Activated naive CD4-positive, alpha-beta T cell treated with anti-CD3 and anti-CD28 coated beads for 36 hours (primary cell): ENCODE measurements at regions of chr4 and their contacts with region 1.

Region 1: GRCh38 chr4:98143001-98143899 is at the start of gene STPG2:
- DNase-seq: peak; percentile 95
- H3K4me3 Mint-ChIP-seq: peak within 1 kb of the TSS; percentile 96
- H3K27ac Mint-ChIP-seq: peak within 1 kb of the TSS; percentile 99
- H3K4me1 Mint-ChIP-seq: peaks cover 19% of the 10 kb centered on the region
- H3K27me3 Mint-ChIP-seq: no peaks in the 10 kb centered on the region
- total RNA-seq, gene STPG2: not detected

Region 2: GRCh38 chr4:97892592-97893266 is 250.5 kb before region 1 on chr4:
- CTCF ChIA-PET with region 1: no interaction called
- intact Hi-C with region 1: no loop called
- DNase-seq: no peak
- H3K4me3 Mint-ChIP-seq: no peak overlapping the region
- H3K27ac Mint-ChIP-seq: no peak overlapping the region
- H3K4me1 Mint-ChIP-seq: no peaks in the 10 kb centered on the region
- H3K27me3 Mint-ChIP-seq: no peaks in the 10 kb centered on the region

Region 3: GRCh38 chr4:98260579-98261290 is 117.5 kb after region 1 on chr4:
- CTCF ChIA-PET with region 1: interaction called, 3 read pairs
- intact Hi-C with region 1: loop called (anchors 1 kb)
- DNase-seq: peak; percentile 95
- H3K4me3 Mint-ChIP-seq: peak overlapping the region; percentile 93
- H3K27ac Mint-ChIP-seq: peak overlapping the region; percentile 94
- H3K4me1 Mint-ChIP-seq: peaks cover 43% of the 10 kb centered on the region
- H3K27me3 Mint-ChIP-seq: no peaks in the 10 kb centered on the region

Region 4: GRCh38 chr4:98467627-98468072 is 324.4 kb after region 1 on chr4:
- CTCF ChIA-PET with region 1: interaction called, 5 read pairs
- intact Hi-C with region 1: loop called (anchors 5 kb)
- DNase-seq: peak; percentile 85
- H3K4me3 Mint-ChIP-seq: peak overlapping the region; percentile 65
- H3K27ac Mint-ChIP-seq: no peak overlapping the region
- H3K4me1 Mint-ChIP-seq: peaks cover 16% of the 10 kb centered on the region
- H3K27me3 Mint-ChIP-seq: no peaks in the 10 kb centered on the region

Region 5: GRCh38 chr4:98851806-98852205 is 708.6 kb after region 1 on chr4:
- CTCF ChIA-PET with region 1: no interaction called
- intact Hi-C with region 1: loop called (anchors 10 kb)
- DNase-seq: no peak
- H3K4me3 Mint-ChIP-seq: no peak overlapping the region
- H3K27ac Mint-ChIP-seq: no peak overlapping the region
- H3K4me1 Mint-ChIP-seq: no peaks in the 10 kb centered on the region
- H3K27me3 Mint-ChIP-seq: peaks cover 12% of the 10 kb centered on the region

Region 6: DNA sequence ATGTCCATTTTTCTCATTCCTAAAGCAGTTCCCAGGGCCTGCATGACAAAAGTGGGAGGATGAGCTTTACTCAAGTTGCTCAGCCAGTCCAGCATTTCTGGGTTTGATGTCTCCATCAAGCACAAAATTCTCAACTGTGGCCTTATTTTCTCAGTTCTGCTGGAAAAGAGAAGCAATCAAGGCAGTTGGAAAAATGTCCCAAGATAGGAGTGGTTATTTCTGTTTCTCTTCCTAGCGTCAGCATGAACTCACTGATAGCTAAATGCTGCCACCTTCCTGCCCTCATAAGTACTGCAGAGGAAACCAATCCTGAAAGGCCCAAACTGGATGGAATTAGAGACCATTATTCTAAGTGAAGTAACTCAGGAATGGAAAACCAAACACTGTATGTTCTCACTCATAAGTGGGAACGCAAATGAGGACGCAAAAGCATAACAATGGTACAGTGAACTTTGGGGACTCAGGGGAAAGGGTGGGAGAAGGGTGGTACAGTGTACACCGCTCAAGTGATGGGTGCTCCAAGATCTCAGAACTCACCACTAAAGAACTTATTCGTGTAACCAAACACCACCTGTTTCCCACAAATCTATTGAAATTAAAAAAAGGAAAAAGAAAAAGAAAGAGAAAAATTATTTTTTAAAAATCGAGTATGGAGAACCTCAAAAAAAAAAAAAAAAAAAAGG is 1262.3 kb after region 1 on chr4:
- CTCF ChIA-PET with region 1: no interaction called
- intact Hi-C with region 1: loop called (anchors 1 kb)
- DNase-seq: peak; percentile 77
- H3K4me3 Mint-ChIP-seq: no peak overlapping the region
- H3K27ac Mint-ChIP-seq: no peak overlapping the region
- H3K4me1 Mint-ChIP-seq: no peaks in the 10 kb centered on the region
- H3K27me3 Mint-ChIP-seq: no peaks in the 10 kb centered on the region